Cardiac septum (tissue), 1 donor: ENCODE measurements at regions of chr2 and their contacts with region 1.

Region 1: DNA sequence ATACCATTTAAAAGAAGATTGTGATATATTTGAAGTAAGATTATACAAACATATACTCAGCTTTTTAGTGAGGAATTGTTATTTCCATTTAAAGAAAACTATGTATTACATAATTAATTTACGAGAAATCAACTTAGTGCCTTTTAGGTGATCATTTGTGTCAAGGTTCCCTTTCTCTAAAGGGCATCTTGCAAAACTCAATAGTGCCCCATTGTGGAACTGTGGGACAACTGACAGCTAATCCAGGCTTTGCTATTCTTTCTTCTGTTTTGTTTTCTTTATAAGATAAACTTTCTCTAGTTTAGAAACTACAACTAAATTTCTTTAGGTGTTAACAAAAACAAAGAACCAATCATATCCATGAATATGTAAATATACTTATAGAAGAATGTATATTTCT is 24.3 kb upstream of the VIT start:
- DNase-seq: no peak

Region 2: DNA sequence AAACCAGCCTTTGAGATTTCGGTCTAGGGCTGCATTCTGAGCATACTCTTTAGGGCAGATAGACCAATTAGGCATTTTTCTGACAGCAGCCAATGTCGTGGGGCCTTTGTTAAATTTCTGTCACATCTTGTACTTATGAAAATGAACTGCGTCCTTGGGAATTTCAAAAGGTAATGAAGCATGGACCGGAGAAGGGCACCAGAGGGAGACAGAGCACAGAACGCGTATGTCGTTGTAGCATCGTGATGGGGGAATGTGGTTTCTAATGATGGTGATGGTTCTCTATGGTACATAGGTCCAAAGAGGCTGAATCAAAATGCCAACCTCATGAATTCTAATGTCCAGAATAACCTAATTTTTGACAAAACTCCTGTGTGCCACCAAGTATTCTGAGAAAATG is 800.5 kb before region 1 on chr2:
- intact Hi-C with region 1: loop called (anchors 5 kb)
- DNase-seq: no peak